ENCODE measurements at regions of chr16 and their contacts with region 1.

Region 1: GRCh38 chr16:70460737-70461261 is 6.4 kb downstream of the FCSK start:
- DNase-seq: no peak
- ATAC-seq: no peak
- H3K4me3 ChIP-seq: no peak overlapping the region
- H3K4me3 Mint-ChIP-seq: no peak overlapping the region
- H3K27ac ChIP-seq: no peak overlapping the region
- H3K27ac Mint-ChIP-seq: no peak overlapping the region
- H3K4me1 ChIP-seq: peaks cover 0 to 3% of the 10 kb centered on the region in 2 experiments
- H3K4me1 Mint-ChIP-seq: peaks cover 6 to 10% (median 9%) of the 10 kb centered on the region in 3 donors
- H3K27me3 ChIP-seq: no peaks in the 10 kb centered on the region
- H3K27me3 Mint-ChIP-seq: no peaks in the 10 kb centered on the region

Region 2: DNA sequence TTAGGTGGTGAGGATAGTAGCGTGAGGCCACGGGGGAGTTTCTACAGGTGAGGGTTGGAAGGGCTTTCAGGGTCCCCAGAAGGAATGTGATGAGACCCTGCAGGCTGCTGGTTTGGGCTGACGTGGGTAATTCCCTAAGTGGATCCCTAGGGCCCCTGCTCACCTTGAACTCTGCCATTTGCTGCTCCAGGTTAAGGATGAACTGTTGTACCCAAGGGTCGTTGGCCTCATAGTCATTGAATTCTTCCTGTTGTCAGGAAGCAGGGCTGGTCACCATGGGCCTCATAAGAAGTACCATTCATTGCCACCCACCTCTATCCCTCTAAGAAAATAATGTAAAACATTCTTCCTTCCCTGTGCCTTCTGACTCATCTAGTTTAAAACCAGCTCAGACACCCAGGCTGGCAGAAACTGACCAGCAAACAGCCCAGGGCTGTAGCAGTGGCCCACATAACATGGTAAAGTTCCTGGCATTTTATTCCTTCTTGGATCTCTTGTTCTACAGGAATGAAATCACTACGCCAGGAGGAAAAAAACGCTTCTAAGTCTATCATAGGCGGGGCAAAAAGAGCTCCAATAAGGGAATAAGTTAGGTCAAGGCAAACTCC is 21.2 kb after region 1 on chr16:
- CTCF ChIA-PET with region 1: no interaction called
- POLR2A ChIA-PET with region 1: interaction called in 1 of 2 experiments, 11 read pairs
- DNase-seq: no peak
- ATAC-seq: no peak
- H3K4me3 ChIP-seq: no peak overlapping the region
- H3K4me3 Mint-ChIP-seq: no peak overlapping the region
- H3K27ac ChIP-seq: no peak overlapping the region
- H3K27ac Mint-ChIP-seq: no peak overlapping the region
- H3K4me1 ChIP-seq: peaks cover 0 to 11% of the 10 kb centered on the region in 2 experiments
- H3K4me1 Mint-ChIP-seq: peaks cover 0 to 6% (median 2%) of the 10 kb centered on the region in 3 donors
- H3K27me3 ChIP-seq: no peaks in the 10 kb centered on the region
- H3K27me3 Mint-ChIP-seq: no peaks in the 10 kb centered on the region

Measured in T-cell (primary cell).